Psoas muscle (tissue), 8 donors: ENCODE measurements at regions of chr1 and their contacts with region 1.

Region 1: DNA sequence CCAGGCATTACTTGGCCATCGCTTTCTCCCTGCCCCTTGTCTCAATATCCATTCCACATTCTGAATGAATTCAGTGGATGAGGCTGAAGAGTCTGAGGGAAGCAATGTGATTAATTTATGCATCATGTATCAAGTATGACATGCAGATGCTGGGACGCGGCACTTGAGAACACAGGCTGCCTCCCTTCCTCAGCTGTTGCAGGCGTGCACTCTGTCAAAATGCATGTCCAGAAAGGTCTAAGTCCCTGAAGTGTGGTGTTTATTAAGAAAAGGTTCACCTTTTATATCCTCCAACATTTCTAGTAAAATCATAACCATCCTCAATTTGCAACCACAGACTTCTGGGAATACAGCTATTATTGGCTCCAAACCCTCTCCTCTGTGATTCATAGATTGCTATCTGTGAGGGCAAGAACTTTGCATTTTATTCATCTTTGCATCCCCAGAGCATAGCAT is 22.6 kb upstream of the RAB3GAP2 start:
- DNase-seq: no peak
- ATAC-seq: no peak
- H3K4me3 ChIP-seq: no peak overlapping the region
- H3K27ac ChIP-seq: no peak overlapping the region
- H3K4me1 ChIP-seq: no peaks in the 10 kb centered on the region
- H3K27me3 ChIP-seq: no peaks in the 10 kb centered on the region
- CTCF ChIP-seq: no peak

Region 2: GRCh38 chr1:219945795-219946194 is 349.1 kb before region 1 on chr1:
- intact Hi-C with region 1: no loop called
- DNase-seq: no peak
- ATAC-seq: no peak
- H3K4me3 ChIP-seq: no peak overlapping the region
- H3K27ac ChIP-seq: no peak overlapping the region
- H3K4me1 ChIP-seq: no peaks in the 10 kb centered on the region
- H3K27me3 ChIP-seq: peaks cover 0 to 2% (median 0%) of the 10 kb centered on the region in 3 donors
- CTCF ChIP-seq: no peak

Region 3: DNA sequence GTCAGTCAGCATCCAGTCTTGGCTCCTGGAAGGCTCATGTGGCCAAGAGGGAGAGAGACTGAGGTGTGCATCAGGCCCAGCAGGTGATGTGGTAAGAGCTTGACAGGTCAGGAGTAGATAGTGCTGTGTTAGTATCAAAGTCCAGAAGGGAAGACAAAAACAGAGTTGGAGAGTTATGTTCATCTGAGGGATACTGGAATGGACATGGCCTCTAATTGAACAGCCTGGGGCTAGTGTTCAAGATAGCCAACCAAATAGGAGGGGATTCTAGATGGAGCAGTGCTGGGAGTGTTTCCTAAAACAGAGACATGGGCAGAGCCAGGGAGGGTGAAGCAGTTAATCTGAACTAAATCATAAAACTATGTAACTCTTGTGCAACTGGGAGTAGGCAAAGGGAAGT is 112.3 kb after region 1 on chr1:
- intact Hi-C with region 1: no loop called
- DNase-seq: no peak
- ATAC-seq: no peak
- H3K4me3 ChIP-seq: no peak overlapping the region
- H3K27ac ChIP-seq: no peak overlapping the region
- H3K4me1 ChIP-seq: no peaks in the 10 kb centered on the region
- H3K27me3 ChIP-seq: no peaks in the 10 kb centered on the region
- CTCF ChIP-seq: no peak

Region 4: GRCh38 chr1:220430059-220430458 is 135.2 kb after region 1 on chr1:
- intact Hi-C with region 1: loop called in 1 of 2 experiments (anchors 10 kb)
- DNase-seq: no peak
- ATAC-seq: no peak
- H3K4me3 ChIP-seq: no peak overlapping the region
- H3K27ac ChIP-seq: no peak overlapping the region
- H3K4me1 ChIP-seq: no peaks in the 10 kb centered on the region
- H3K27me3 ChIP-seq: no peaks in the 10 kb centered on the region
- CTCF ChIP-seq: no peak

Region 5: GRCh38 chr1:220733090-220733601 is 438.3 kb after region 1 on chr1:
- intact Hi-C with region 1: loop called in 1 of 2 experiments (anchors 5 kb)
- DNase-seq: peak; percentile 70 to 86
- ATAC-seq: peak; percentile 87 to 99 (median 94)
- H3K4me3 ChIP-seq: peak overlapping the region; percentile 35
- H3K27ac ChIP-seq: peak overlapping the region; percentile 3
- H3K4me1 ChIP-seq: no peaks in the 10 kb centered on the region
- H3K27me3 ChIP-seq: no peaks in the 10 kb centered on the region
- CTCF ChIP-seq: peak; percentile 75